Mammary epithelial cell (primary cell): ENCODE measurements at regions of chr10 and their contacts with region 1.

Region 1: GRCh38 chr10:123043409-123043925 is 34.7 kb downstream of the ACADSB start:
- DNase-seq: peak; percentile 58
- H3K4me3 ChIP-seq: no peak overlapping the region
- H3K27ac ChIP-seq: no peak overlapping the region
- H3K4me1 ChIP-seq: no peaks in the 10 kb centered on the region
- H3K27me3 ChIP-seq: no peaks in the 10 kb centered on the region
- CTCF ChIP-seq: peak; percentile 84 to 91

Region 2: GRCh38 chr10:123154092-123154921 is 110.8 kb after region 1 on chr10 and contains the start of gene BUB3:
- CTCF ChIA-PET with region 1: interaction called, 3 read pairs
- dilution Hi-C with region 1: no loop called
- in situ Hi-C with region 1: no loop called
- intact Hi-C with region 1: loop called (anchors 5 kb)
- DNase-seq: peak; percentile 99
- H3K4me3 ChIP-seq: peak within 1 kb of the TSS; percentile 80 to 99 (median 95)
- H3K27ac ChIP-seq: peak within 1 kb of the TSS; percentile 88
- H3K4me1 ChIP-seq: peaks cover 48% of the 10 kb centered on the region
- H3K27me3 ChIP-seq: peaks cover 19% of the 10 kb centered on the region
- CTCF ChIP-seq: peak in 1 of 2 donors; percentile 34
- total RNA-seq, gene BUB3: 137 to 158 TPM

Region 3: GRCh38 chr10:123287594-123288247 is 244.3 kb after region 1 on chr10:
- CTCF ChIA-PET with region 1: no interaction called
- dilution Hi-C with region 1: no loop called
- in situ Hi-C with region 1: no loop called
- intact Hi-C with region 1: loop called (anchors 1 kb)
- DNase-seq: peak; percentile 96
- H3K4me3 ChIP-seq: no peak overlapping the region
- H3K27ac ChIP-seq: no peak overlapping the region
- H3K4me1 ChIP-seq: peaks cover 6% of the 10 kb centered on the region
- H3K27me3 ChIP-seq: no peaks in the 10 kb centered on the region
- CTCF ChIP-seq: no peak

Region 4: DNA sequence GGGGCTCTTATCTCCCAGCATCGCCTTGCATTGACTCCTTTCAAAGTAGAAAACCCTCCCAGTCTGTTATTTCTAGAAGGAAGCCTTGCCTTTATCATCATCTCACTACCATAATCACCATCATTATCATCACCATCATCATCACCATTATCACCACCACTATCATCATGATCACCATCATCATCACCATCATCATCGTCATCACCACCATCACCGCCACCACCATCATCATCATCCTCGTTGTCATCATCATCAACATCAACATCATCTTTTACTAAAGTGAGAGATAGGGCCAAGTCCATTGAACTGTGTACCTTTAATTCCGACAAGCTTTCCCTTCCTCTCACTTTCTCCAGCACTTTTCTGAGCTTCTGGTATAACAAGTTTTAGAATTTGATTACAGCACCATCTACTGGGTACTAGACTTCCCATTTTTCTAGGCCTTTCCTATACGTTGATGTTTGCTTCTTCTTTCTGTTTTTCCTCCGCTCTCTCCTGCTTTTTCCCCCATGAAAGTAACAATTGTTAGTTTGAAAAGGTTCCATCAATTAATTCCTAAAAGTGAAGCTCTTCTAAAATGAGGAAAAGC is 337.1 kb after region 1 on chr10:
- CTCF ChIA-PET with region 1: no interaction called
- dilution Hi-C with region 1: no loop called
- in situ Hi-C with region 1: loop called (anchors 10 kb)
- intact Hi-C with region 1: loop called (anchors 1 kb)
- DNase-seq: peak; percentile 32
- H3K4me3 ChIP-seq: no peak overlapping the region
- H3K27ac ChIP-seq: no peak overlapping the region
- H3K4me1 ChIP-seq: peaks cover 12% of the 10 kb centered on the region
- H3K27me3 ChIP-seq: no peaks in the 10 kb centered on the region
- CTCF ChIP-seq: peak; percentile 19 to 58

Region 5: GRCh38 chr10:123552760-123553554 is 509.5 kb after region 1 on chr10:
- CTCF ChIA-PET with region 1: no interaction called
- dilution Hi-C with region 1: loop called (anchors 5 kb)
- in situ Hi-C with region 1: loop called (anchors 10 kb)
- intact Hi-C with region 1: no loop called
- DNase-seq: no peak
- H3K4me3 ChIP-seq: no peak overlapping the region
- H3K27ac ChIP-seq: no peak overlapping the region
- H3K4me1 ChIP-seq: no peaks in the 10 kb centered on the region
- H3K27me3 ChIP-seq: peaks cover 4% of the 10 kb centered on the region
- CTCF ChIP-seq: no peak

Region 6: GRCh38 chr10:123559066-123559822 is 515.8 kb after region 1 on chr10:
- CTCF ChIA-PET with region 1: no interaction called
- dilution Hi-C with region 1: loop called (anchors 5 kb)
- in situ Hi-C with region 1: loop called (anchors 10 kb)
- intact Hi-C with region 1: loop called (anchors 1 kb)
- DNase-seq: peak; percentile 34
- H3K4me3 ChIP-seq: no peak overlapping the region
- H3K27ac ChIP-seq: no peak overlapping the region
- H3K4me1 ChIP-seq: no peaks in the 10 kb centered on the region
- H3K27me3 ChIP-seq: no peaks in the 10 kb centered on the region
- CTCF ChIP-seq: peak; percentile 91 to 98

Region 7: GRCh38 chr10:123967396-123968243 is 924.2 kb after region 1 on chr10:
- CTCF ChIA-PET with region 1: no interaction called
- dilution Hi-C with region 1: no loop called
- in situ Hi-C with region 1: loop called in 1 of 2 experiments (anchors 25 kb)
- intact Hi-C with region 1: loop called (anchors 1 kb)
- DNase-seq: peak; percentile 16
- H3K4me3 ChIP-seq: no peak overlapping the region
- H3K27ac ChIP-seq: no peak overlapping the region
- H3K4me1 ChIP-seq: no peaks in the 10 kb centered on the region
- H3K27me3 ChIP-seq: peaks cover 5% of the 10 kb centered on the region
- CTCF ChIP-seq: peak; percentile 80 to 97